ENCODE measurements at regions of chr15 and their contacts with region 1.

Region 1: DNA sequence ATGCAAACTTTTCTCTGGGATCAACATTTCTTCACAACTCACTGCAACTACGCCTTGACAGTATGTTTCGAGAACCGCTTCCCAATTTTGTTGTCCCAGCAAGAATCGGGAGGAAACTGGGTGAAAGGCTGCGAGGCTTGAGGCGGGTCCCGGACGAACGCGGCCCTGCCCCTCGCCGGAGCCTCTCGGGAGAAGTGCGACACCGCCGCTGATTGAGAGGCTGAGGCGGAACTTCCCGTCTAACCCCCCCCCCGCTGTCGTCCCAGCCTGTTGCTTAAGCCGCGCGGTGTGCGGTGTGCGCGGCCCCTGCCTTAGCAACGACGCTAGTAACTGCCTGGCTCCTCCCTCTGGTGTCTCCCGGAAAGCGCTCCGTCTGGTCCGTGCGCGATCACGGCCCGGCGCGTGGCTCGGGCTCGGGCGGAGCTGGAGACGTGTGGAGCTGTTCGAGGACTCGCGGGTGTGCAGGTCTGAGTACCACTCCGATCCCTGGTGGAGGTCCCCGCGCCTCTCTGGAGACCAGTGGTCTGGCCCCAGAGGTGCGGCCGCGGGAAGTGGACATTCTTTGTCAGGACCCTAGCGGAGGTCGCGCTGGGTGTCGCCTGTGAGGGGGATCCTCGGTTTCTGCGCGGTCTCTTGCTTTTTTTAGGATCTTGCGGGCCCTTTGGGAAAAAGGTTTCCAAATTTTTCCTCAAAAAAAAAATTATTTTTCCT is at the starts of genes DTWD1 and FAM227B:
- DNase-seq: peak; percentile 93
- H3K4me3 Mint-ChIP-seq: peak within 1 kb of the TSS; percentile 85
- H3K27ac Mint-ChIP-seq: peak within 1 kb of the TSS; percentile 88
- H3K4me1 Mint-ChIP-seq: peaks cover 40% of the 10 kb centered on the region
- H3K27me3 Mint-ChIP-seq: no peaks in the 10 kb centered on the region
- total RNA-seq, gene DTWD1: 21.1 and 26.5 TPM in 2 replicates
- total RNA-seq, gene FAM227B: 2.3 and 2.9 TPM in 2 replicates

Region 2: DNA sequence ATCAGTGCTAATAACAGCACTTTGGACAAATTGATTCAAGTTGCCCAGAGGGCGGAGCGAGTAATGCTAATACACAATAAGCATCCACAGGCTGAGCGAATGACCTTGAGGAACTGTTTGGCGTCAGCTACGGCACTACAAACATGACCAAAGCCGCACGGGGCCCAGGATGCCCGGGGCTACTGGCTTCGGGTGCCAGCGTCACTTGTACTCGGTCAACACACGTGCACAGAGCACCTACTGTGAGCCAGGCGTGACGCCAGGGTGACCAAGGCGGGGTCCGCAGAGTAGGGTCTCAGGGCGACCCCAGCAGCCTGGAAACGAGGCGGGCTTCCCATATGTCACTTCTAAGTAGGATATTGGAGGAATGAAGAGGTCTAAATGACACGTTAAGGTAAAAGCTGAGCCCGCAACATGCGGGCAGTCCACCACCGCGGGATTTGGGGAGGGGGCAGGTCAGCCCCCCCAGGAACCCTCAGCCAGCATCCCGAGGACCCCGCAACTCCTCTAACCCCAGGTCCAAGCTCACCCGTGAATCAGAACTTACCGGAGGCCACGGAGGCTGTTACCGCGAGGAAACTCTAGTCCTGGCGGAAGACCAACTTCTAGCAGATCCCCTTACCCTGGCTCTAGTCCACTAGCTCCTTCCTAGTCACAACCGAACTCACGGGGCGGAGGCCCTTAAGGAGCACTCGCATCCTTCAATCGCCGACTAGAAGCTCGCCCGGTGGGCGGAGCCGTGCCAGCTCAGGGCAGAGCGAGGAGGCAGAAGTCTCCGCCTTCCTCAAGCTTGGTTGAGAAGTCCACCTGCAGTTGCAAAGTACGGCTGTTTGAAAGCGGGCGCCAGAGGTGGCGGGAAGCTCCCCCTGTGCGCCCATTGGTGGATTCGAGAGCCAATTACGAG is 810.1 kb before region 1 on chr15 and contains the start of gene CEP152:
- intact Hi-C with region 1: loop called (anchors 1 kb)
- DNase-seq: peak; percentile 98
- H3K4me3 Mint-ChIP-seq: peak within 1 kb of the TSS; percentile 97
- H3K27ac Mint-ChIP-seq: peak within 1 kb of the TSS; percentile 93
- H3K4me1 Mint-ChIP-seq: peaks cover 44% of the 10 kb centered on the region
- H3K27me3 Mint-ChIP-seq: peaks cover 15% of the 10 kb centered on the region
- total RNA-seq, gene CEP152: 27.3 and 28.0 TPM in 2 replicates

Region 3: GRCh38 chr15:49046220-49047102 is 574.4 kb before region 1 on chr15 and contains the start of gene SECISBP2L:
- intact Hi-C with region 1: loop called (anchors 2 kb)
- DNase-seq: peak; percentile 87
- H3K4me3 Mint-ChIP-seq: peak within 1 kb of the TSS; percentile 96
- H3K27ac Mint-ChIP-seq: peak within 1 kb of the TSS; percentile 91
- H3K4me1 Mint-ChIP-seq: peaks cover 35% of the 10 kb centered on the region
- H3K27me3 Mint-ChIP-seq: no peaks in the 10 kb centered on the region
- total RNA-seq, gene SECISBP2L: 38.0 and 44.8 TPM in 2 replicates

Region 4: GRCh38 chr15:49282366-49282765 is 338.4 kb before region 1 on chr15:
- intact Hi-C with region 1: loop called (anchors 5 kb)
- DNase-seq: no peak
- H3K4me3 Mint-ChIP-seq: no peak overlapping the region
- H3K27ac Mint-ChIP-seq: no peak overlapping the region
- H3K4me1 Mint-ChIP-seq: peaks cover 24% of the 10 kb centered on the region
- H3K27me3 Mint-ChIP-seq: no peaks in the 10 kb centered on the region

Region 5: GRCh38 chr15:49560045-49560444 is 60.8 kb before region 1 on chr15:
- intact Hi-C with region 1: no loop called
- DNase-seq: no peak
- H3K4me3 Mint-ChIP-seq: no peak overlapping the region
- H3K27ac Mint-ChIP-seq: no peak overlapping the region
- H3K4me1 Mint-ChIP-seq: no peaks in the 10 kb centered on the region
- H3K27me3 Mint-ChIP-seq: no peaks in the 10 kb centered on the region

Region 6: GRCh38 chr15:49664716-49665115 is 43.9 kb after region 1 on chr15:
- intact Hi-C with region 1: no loop called
- DNase-seq: no peak
- H3K4me3 Mint-ChIP-seq: no peak overlapping the region
- H3K27ac Mint-ChIP-seq: no peak overlapping the region
- H3K4me1 Mint-ChIP-seq: no peaks in the 10 kb centered on the region
- H3K27me3 Mint-ChIP-seq: peaks cover 20% of the 10 kb centered on the region

Region 7: DNA sequence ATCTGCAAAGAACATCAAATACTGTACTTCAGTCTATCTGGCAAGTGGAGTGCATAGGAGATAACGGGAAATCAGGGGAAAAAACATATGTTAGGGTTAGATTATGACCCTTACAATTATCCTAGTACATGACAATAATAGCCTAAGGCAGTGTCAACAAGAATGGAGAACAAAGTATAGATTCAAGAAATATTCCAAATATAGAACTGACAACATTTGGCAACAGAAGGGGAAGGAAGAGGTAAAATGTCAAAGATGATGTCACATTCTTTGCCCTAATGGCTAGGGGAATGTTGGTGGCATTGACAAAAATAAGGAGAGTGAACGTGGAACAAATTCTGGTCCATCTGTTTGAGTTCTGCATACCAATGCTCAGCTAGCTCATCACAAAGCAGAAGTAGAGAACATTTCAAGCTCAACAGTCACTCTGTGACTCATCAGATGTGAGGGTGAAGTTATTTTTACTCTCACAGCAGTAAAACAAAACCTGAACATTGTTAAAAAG is 513.8 kb after region 1 on chr15:
- intact Hi-C with region 1: loop called (anchors 1 kb)
- DNase-seq: no peak
- H3K4me3 Mint-ChIP-seq: peak overlapping the region; percentile 20
- H3K27ac Mint-ChIP-seq: peak overlapping the region; percentile 89
- H3K4me1 Mint-ChIP-seq: peaks cover 56% of the 10 kb centered on the region
- H3K27me3 Mint-ChIP-seq: no peaks in the 10 kb centered on the region

Region 8: DNA sequence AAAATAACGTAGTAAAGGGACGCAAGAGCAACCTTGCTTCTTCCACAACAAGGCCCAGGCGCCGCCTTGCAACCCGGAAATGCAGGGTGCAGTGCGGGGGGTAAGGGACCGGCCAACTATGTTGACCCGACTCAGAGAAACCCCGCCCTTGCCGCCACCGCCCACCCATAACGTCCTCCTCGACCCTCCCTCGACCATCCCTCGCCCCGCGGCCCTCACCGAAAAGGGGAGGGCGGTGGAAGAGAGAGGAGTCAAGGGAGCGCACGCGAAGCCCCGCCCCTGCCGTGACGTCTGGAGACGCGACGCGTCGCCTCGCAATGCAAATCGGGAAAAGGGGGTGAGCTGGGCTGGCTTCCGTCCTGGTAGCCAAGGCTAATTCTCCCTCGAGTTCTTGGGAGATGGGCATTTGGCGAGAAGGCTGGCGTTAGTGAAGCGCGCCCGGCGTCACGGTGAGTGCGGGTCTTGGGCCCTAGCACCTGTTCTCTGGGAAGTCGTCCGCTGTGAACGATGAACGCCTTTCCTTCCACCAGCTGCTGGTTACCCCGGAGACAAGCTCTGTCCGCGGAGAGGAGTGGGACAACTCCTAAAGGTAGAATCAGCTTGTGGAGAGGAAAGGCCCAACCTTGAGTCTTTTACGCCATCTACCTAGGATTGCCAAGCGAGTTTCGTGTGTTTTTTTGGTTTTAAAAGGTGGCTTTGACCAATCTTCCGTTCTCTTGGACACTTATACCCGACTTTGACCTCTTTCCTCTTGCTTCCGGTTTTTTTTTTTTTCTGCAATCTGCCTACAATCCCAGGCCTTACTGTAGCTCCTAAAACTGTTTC is 803.5 kb after region 1 on chr15 and contains the start of gene USP8:
- intact Hi-C with region 1: loop called (anchors 1 kb)
- DNase-seq: peak; percentile 92
- H3K4me3 Mint-ChIP-seq: peak within 1 kb of the TSS; percentile 98
- H3K27ac Mint-ChIP-seq: peak within 1 kb of the TSS; percentile 92
- H3K4me1 Mint-ChIP-seq: peaks cover 25% of the 10 kb centered on the region
- H3K27me3 Mint-ChIP-seq: no peaks in the 10 kb centered on the region
- total RNA-seq, gene USP8: 66.2 and 66.3 TPM in 2 replicates